SK-N-SH (cell line): ENCODE measurements at regions of chr1 and their contacts with region 1.

Region 1: DNA sequence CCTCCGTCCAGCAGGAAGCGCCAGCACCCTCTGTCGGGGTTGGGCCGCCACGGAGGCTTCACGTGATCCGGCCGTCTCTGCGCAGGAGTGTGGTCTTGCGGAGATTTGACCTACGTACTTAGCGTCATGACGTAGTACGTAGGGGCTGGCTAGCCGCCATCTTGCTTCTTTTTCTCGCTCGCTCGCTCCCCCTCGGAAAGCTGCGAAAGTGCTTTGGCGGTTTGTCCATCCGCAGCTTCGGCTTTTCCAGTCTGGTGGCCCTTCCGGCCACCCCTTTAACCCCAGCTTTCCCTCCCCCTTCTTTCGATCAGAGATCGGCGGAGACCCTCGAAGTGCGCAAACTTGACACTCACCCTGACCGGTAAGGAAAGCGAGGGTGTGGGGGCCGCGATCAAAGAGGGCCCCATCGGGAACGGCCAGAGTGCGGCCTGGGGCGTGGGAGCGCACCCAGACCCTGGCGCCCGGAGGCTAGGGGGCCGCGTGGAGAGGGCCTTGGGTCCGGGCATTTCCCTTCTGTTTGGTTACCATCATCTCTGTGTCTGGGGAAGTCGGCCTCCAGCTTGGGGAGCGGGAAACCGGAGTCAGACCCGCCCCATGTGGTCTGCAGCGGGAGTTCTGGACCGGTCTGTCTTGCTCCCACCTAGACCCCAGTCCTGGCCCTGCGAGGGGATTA is at the start of gene PRRC2C:
- DNase-seq: peak; percentile 90
- H3K4me3 ChIP-seq: peak within 1 kb of the TSS; percentile 94 to 100
- H3K27ac ChIP-seq: peak within 1 kb of the TSS; percentile 97 to 100
- H3K4me1 ChIP-seq: peaks cover 10 to 15% of the 10 kb centered on the region in 2 experiments; a peak in 3 of 4 replicates
- H3K27me3 ChIP-seq: no peaks in the 10 kb centered on the region
- CTCF ChIP-seq: peak; percentile 79
- EP300 ChIP-seq: no peak
- RAD21 ChIP-seq: peak; percentile 74
- polyA plus RNA-seq, gene PRRC2C: 39.9 and 45.6 TPM in 2 replicates

Region 2: GRCh38 chr1:171233190-171233589 is 252.3 kb before region 1 on chr1:
- CTCF ChIA-PET with region 1: no interaction called
- POLR2A ChIA-PET with region 1: no interaction called
- DNase-seq: no peak
- H3K4me3 ChIP-seq: no peak overlapping the region
- H3K27ac ChIP-seq: no peak overlapping the region
- H3K4me1 ChIP-seq: no peaks in the 10 kb centered on the region
- H3K27me3 ChIP-seq: peaks cover 6% of the 10 kb centered on the region; the same call in 1 of the 2 replicates
- CTCF ChIP-seq: no peak
- EP300 ChIP-seq: no peak
- RAD21 ChIP-seq: no peak

Region 3: GRCh38 chr1:171501305-171502024 is 16.0 kb after region 1 on chr1:
- CTCF ChIA-PET with region 1: interaction called, 16 read pairs
- POLR2A ChIA-PET with region 1: no interaction called
- DNase-seq: no peak
- H3K4me3 ChIP-seq: no peak overlapping the region
- H3K27ac ChIP-seq: no peak overlapping the region
- H3K4me1 ChIP-seq: 0 out of 4 replicates have a peak, but pooled peaks cover 0 to 3% of the 10 kb centered on the region in 2 experiments
- H3K27me3 ChIP-seq: no peaks in the 10 kb centered on the region
- CTCF ChIP-seq: no peak
- EP300 ChIP-seq: no peak
- RAD21 ChIP-seq: no peak

Region 4: GRCh38 chr1:171715813-171716251 is 230.3 kb after region 1 on chr1:
- CTCF ChIA-PET with region 1: interaction called, 16 read pairs
- POLR2A ChIA-PET with region 1: no interaction called
- DNase-seq: no peak
- H3K4me3 ChIP-seq: no peak overlapping the region
- H3K27ac ChIP-seq: no peak overlapping the region
- H3K4me1 ChIP-seq: no peaks in the 10 kb centered on the region
- H3K27me3 ChIP-seq: no peaks in the 10 kb centered on the region
- CTCF ChIP-seq: peak; percentile 70
- EP300 ChIP-seq: no peak
- RAD21 ChIP-seq: peak; percentile 55